Mammary epithelial cell (primary cell): ENCODE measurements at regions of chr10 and their contacts with region 1.

Region 1: GRCh38 chr10:12902135-12902572 is 99.4 kb downstream of the CCDC3 start:
- DNase-seq: peak; percentile 41
- H3K4me3 ChIP-seq: no peak overlapping the region
- H3K27ac ChIP-seq: no peak overlapping the region
- H3K4me1 ChIP-seq: no peaks in the 10 kb centered on the region
- H3K27me3 ChIP-seq: peaks cover 1% of the 10 kb centered on the region
- CTCF ChIP-seq: peak; percentile 57 to 73

Region 2: DNA sequence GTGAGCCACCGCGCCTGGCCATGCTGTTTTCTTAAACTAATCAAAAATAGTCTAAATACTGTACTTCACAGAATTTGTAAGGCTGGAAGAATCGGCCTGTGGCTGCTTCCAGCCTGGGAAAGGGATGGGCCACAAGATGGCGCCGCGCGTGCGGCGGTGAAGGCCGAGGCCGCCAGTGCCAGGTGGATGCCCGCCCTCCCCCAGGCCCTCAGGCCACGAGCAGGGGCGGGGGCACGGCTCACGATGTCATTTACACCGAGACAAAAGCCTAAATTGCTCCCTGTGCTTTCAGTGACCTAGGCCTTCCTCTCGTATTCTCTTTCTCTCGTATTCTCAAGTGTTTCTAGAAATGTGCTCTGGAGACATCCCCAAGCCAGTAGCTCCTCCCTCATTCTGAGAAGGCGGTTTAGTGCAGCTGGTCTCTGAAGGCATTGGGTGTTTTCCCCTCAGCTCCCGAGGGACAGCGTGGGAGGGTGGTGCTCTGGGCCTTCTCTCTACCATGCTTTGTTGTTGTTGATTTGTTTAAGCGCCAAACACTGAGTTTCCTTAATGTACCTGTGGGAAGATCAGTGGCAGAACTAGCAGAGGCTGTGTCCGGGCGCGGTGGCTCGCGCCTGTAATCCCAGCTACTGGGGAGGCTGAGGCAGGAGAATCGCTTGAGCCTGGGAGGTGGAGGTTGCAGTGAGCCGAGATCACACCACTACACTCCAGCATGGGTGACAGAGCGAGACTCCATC is 637.8 kb before region 1 on chr10:
- CTCF ChIA-PET with region 1: interaction called, 6 read pairs
- dilution Hi-C with region 1: no loop called
- in situ Hi-C with region 1: no loop called
- intact Hi-C with region 1: loop called (anchors 1 kb)
- DNase-seq: peak; percentile 67
- H3K4me3 ChIP-seq: peak overlapping the region; percentile 15 to 39 (median 19)
- H3K27ac ChIP-seq: no peak overlapping the region
- H3K4me1 ChIP-seq: peaks cover 3% of the 10 kb centered on the region
- H3K27me3 ChIP-seq: no peaks in the 10 kb centered on the region
- CTCF ChIP-seq: peak; percentile 67 to 89

Region 3: GRCh38 chr10:12628964-12629766 is 273.0 kb before region 1 on chr10:
- CTCF ChIA-PET with region 1: no interaction called
- dilution Hi-C with region 1: no loop called
- in situ Hi-C with region 1: no loop called
- intact Hi-C with region 1: no loop called
- DNase-seq: no peak
- H3K4me3 ChIP-seq: no peak overlapping the region
- H3K27ac ChIP-seq: no peak overlapping the region
- H3K4me1 ChIP-seq: peaks cover 10% of the 10 kb centered on the region
- H3K27me3 ChIP-seq: no peaks in the 10 kb centered on the region
- CTCF ChIP-seq: no peak

Region 4: DNA sequence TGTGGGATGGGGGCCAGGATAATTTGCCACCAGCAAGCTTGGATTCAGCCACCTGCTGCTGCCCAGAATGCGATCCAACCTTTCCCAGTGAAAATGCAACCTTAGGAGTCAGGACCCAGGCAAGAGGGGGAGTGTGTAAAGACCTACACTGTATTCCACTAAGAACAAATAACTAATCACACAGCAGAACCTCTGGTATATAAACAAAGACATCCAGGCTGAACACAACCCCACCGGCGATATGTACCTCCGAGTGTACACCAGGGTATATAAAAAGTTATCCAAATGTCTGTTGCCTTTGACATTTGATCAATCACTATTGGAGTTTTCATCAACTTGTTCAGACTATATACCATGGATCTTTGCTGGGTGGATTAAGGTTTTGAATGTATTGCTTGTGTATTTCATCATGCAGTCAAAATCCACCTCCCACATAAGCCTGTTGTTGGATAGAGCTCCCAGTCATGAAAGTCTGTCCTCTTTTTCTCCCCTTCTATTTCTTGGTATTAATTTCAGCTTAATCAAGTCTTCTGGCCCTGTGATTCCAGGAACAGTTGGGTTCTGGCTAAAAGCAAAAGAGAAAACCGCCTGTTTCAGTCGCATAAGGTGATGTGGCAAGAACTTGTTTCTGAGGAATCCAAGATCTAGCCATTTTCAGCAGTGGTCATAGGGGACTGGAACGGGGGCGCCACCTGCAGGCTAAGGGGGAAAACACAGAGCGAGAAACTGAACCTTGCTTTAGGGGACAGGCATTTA is 191.4 kb before region 1 on chr10:
- CTCF ChIA-PET with region 1: no interaction called
- dilution Hi-C with region 1: no loop called
- in situ Hi-C with region 1: no loop called
- intact Hi-C with region 1: loop called (anchors 2 kb)
- DNase-seq: peak; percentile 65
- H3K4me3 ChIP-seq: no peak overlapping the region
- H3K27ac ChIP-seq: peak overlapping the region; percentile 4
- H3K4me1 ChIP-seq: peaks cover 33% of the 10 kb centered on the region
- H3K27me3 ChIP-seq: no peaks in the 10 kb centered on the region
- CTCF ChIP-seq: peak; percentile 96 to 99

Region 5: GRCh38 chr10:12782537-12782936 is 119.6 kb before region 1 on chr10:
- CTCF ChIA-PET with region 1: interaction called, 4 read pairs
- dilution Hi-C with region 1: no loop called
- in situ Hi-C with region 1: no loop called
- intact Hi-C with region 1: loop called (anchors 2 kb)
- DNase-seq: peak; percentile 6
- H3K4me3 ChIP-seq: no peak overlapping the region
- H3K27ac ChIP-seq: no peak overlapping the region
- H3K4me1 ChIP-seq: no peaks in the 10 kb centered on the region
- H3K27me3 ChIP-seq: no peaks in the 10 kb centered on the region
- CTCF ChIP-seq: peak; percentile 53 to 67

Region 6: GRCh38 chr10:13056456-13057077 is 154.4 kb after region 1 on chr10:
- CTCF ChIA-PET with region 1: no interaction called
- dilution Hi-C with region 1: no loop called
- in situ Hi-C with region 1: no loop called
- intact Hi-C with region 1: loop called (anchors 5 kb)
- DNase-seq: peak; percentile 8
- H3K4me3 ChIP-seq: no peak overlapping the region
- H3K27ac ChIP-seq: no peak overlapping the region
- H3K4me1 ChIP-seq: no peaks in the 10 kb centered on the region
- H3K27me3 ChIP-seq: no peaks in the 10 kb centered on the region
- CTCF ChIP-seq: peak; percentile 37 to 65

Region 7: DNA sequence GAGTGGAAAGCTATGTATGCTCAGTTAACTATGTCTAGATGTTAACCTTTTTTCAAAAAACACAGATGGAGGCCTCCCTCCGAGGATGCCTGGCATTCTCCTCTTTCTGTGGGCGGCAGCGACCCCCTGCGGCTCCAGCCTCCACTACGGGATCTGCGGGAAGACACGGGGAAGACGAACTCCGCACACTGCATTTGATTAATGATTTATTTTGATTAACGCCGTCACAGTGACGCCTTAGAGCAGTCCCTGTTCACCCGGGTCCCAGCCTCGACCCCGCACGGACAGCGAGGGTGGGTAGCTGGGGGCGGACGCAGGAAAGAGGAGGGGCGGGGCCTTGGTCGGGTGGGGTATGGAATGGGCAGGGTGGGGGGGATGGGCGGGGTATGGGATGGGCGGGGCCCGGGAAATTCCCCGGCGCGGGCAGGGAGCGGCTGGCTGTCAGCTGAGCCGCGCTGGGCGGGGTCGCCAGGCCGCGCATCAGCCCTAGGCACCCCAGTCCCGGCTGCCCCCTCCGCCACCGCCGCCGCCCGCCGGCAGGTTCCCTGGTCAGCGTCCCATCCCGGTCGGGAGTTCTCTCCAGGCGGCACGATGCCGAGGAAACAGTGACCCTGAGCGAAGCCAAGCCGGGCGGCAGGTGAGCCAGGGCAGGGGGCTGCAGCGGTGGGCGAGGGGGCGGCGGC is 197.7 kb after region 1 on chr10 and contains the start of gene OPTN:
- CTCF ChIA-PET with region 1: no interaction called
- dilution Hi-C with region 1: no loop called
- in situ Hi-C with region 1: no loop called
- intact Hi-C with region 1: loop called (anchors 1 kb)
- DNase-seq: peak; percentile 82
- H3K4me3 ChIP-seq: peak within 1 kb of the TSS; percentile 69 to 95 (median 82)
- H3K27ac ChIP-seq: peak within 1 kb of the TSS; percentile 74
- H3K4me1 ChIP-seq: peaks cover 6% of the 10 kb centered on the region
- H3K27me3 ChIP-seq: no peaks in the 10 kb centered on the region
- CTCF ChIP-seq: peak; percentile 76 to 89
- total RNA-seq, gene OPTN: 60.0 to 142 TPM